ENCODE measurements at regions of chr2 and their contacts with region 1.

Region 1: DNA sequence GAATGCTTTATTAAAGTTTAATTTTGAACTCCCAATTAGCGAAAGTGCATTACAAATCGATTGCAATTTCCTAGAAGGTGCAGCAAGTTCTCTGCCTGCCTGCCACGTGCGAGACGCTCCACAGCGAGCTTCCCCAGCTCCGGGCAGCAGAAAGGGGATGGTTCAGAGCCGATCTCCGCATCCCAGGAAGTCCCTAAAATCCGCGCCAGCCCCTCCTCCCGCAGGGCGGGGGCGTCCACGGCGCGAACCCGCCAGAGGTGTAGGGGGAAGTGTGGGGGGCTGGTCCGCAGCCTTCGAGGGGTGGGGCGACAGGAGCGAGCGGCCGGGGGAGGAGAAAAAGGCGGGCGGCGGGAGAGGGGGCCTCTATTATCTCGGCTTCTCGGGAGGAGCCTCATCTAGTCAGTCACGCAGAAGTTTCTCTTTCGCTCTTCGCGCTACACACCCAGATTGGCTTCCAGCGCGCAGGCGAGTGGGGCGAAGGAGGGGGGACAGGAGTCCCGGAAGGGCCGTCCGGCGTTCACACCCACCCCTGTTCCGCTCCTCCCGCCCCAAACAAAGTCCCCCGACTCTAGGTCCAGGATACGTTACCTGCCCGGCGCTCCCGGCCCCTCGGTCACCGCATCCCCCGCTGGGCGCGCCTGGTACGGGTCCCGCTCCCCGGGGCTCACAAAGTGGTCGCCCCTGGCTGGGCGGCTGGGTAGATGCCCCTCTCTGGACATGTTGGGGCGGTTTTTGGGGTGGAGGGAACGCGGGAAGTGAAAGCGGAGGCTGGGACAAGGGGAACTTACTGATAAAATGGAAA is 9.1 kb upstream of the NR4A2 start:
- DNase-seq: peak; percentile 96
- H3K4me3 ChIP-seq: peak overlapping the region; percentile 65 to 80 (median 68)
- H3K27ac ChIP-seq: peak overlapping the region; percentile 98 to 100 (median 100)
- H3K4me1 ChIP-seq: peaks cover 9 to 49% (median 29%) of the 10 kb centered on the region in 6 donors
- H3K27me3 ChIP-seq: no peaks in the 10 kb centered on the region
- CTCF ChIP-seq: no peak
- POLR2A ChIP-seq: peak; percentile 17 to 93 (median 83)

Region 2: DNA sequence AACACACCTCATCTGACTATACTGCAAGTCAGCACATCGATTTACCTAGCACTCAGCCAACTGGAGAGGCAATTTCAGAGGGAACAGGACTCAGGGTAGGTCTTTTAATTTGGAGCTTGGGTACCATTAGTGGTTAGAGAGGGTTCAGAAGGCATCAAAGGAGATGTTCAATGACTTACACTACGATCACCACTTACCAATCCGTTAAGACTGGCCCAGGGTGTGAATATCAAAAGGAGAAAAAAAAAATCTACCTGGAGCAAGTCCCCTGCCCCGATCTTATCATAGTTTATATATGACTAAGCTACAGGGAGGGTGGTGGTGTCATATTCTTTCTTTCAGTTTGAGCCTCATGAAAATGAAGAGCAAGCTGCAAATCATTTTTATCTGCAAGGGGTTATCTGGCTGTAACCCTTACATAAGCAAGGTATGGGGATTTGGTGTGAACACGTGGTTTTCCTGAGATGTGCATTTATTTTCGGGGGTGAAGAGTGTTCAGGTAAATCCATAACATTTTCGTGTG is 58.1 kb after region 1 on chr2:
- intact Hi-C with region 1: loop called (anchors 10 kb)
- DNase-seq: no peak
- H3K4me3 ChIP-seq: peak overlapping the region; percentile 46 to 97 (median 73)
- H3K27ac ChIP-seq: peak overlapping the region; percentile 83 to 98 (median 92)
- H3K4me1 ChIP-seq: peaks cover 4 to 39% (median 19%) of the 10 kb centered on the region in 6 donors
- H3K27me3 ChIP-seq: no peaks in the 10 kb centered on the region
- CTCF ChIP-seq: no peak
- POLR2A ChIP-seq: no peak

Region 3: DNA sequence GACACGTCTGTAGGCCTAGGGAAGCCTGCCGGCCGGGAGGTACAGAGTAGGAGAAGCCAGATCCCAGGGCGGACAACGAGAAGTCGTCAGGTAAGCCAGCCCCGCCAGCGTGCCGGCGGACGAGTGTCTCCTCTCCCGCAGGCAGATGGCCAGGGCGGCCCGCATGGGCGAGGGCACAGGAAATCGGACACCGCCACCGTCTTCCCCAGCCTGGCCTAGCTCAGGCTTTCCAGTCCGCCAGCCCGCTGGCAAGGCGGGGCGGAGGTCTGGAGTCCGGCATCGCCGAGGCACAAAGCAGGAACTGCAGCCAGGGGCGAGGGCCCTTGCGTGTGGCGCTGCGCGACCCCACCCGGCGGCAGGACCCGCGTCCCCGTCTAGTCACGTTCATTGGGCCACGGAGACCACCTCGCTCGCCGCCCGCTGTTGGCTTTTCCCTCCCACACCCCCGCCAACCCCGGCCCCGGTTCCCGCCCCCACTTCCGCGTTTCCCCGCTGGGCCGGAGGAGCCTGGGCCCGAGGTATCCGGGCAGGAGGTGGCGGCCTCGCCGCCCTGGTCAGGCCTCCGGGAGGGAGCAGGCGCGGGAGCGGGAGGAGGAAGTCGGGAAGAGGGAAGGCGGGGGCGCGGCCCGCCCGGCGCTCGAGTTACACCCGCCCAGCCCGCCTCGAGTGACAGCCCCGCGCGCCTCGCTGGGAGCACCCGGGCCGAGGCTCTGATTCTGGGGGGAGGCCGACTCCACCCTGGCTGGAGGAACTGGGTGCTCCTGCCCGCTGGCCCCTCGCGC is 94.3 kb after region 1 on chr2 and contains the start of gene GPD2:
- intact Hi-C with region 1: loop called (anchors 10 kb)
- DNase-seq: peak; percentile 95
- H3K4me3 ChIP-seq: peak within 1 kb of the TSS; percentile 50 to 85 (median 62)
- H3K27ac ChIP-seq: peak within 1 kb of the TSS; percentile 89 to 97 (median 96)
- H3K4me1 ChIP-seq: peaks cover 9 to 56% (median 31%) of the 10 kb centered on the region in 6 donors
- H3K27me3 ChIP-seq: no peaks in the 10 kb centered on the region
- CTCF ChIP-seq: peak in 2 of 11 experiments; percentile 14 to 22
- POLR2A ChIP-seq: peak in 1 of 3 donors; percentile 29
- total RNA-seq, gene GPD2: 28.4 to 74.9 (median 32.1) TPM

Region 4: DNA sequence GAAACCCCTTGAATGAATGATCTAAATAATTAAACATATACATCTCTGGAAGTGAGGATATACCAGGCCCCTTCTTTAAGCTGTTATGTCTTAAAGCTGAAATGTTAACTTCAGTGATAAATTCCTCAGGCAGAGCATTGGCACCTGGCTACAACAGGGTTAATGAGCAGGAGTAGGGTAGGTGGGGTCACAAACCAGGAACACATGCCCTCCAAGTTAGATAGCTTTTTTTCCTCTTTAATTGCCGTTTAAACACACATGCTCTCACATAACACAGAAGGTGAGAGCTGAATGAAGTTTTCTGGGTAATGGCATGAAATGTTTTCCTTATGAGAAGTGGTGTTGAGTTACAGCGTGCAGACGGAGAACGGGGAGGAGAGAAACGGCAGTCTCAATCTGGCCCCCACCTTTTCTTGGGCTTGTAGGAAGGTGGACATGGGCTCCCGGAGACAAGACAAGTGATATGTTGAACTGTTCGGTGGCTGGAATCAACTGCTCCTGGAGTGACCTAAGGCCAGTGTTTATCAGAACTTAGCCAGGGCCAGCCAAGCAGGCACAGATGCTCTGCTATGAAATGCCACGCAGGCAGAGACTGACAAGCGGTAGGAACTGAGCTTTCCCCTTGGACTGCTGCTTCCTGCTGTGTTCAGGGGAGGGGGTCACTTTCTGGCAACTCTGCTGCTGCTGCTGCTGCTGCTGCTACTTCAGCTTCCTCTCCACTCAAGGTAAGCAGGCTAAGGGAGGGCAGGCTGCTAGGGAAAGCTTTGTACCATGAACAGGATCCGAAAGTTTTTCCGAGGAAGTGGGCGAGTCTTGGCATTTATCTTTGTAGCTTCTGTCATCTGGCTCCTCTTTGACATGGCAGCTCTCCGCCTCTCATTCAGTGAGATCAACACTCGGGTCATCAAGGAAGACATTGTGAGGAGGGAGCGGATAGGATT is 915.9 kb after region 1 on chr2 and contains the start of gene GALNT5:
- intact Hi-C with region 1: no loop called
- DNase-seq: no peak
- H3K4me3 ChIP-seq: peak within 1 kb of the TSS in 2 of 8 donors; percentile 7 to 36
- H3K27ac ChIP-seq: no peak within 1 kb of the TSS
- H3K4me1 ChIP-seq: peaks cover 0 to 10% (median 4%) of the 10 kb centered on the region in 6 donors
- H3K27me3 ChIP-seq: no peaks in the 10 kb centered on the region
- CTCF ChIP-seq: no peak
- POLR2A ChIP-seq: no peak
- total RNA-seq, gene GALNT5: 0.09 to 0.70 (median 0.12) TPM in 4 of 7 donors, not detected in the others

Region 5: DNA sequence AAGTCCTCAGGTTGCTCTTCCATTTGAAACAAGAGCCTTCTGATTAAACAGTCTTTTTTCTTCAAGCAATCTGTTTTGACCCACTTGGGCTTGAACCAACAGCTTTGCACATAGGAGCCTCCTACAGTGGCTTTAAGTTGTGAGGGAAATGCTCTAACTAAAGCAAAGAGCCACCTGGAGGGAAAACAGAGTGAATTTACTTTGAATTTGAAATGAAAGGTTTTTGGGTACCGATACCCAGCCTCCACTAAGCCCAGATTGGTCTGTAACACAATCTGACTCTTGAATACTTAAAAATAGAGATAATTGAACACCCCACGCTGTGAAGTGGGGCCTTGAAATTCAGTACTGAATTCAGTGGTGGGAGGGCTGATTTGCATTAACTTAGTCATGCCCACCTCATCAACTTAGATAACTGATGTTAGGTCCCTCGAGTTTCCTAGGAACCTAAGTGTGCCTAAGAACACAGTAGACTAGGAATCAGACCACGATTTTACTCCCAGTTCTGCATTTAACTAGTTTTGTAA is 1343.3 kb after region 1 on chr2:
- intact Hi-C with region 1: no loop called
- DNase-seq: no peak
- H3K4me3 ChIP-seq: no peak overlapping the region
- H3K27ac ChIP-seq: no peak overlapping the region
- H3K4me1 ChIP-seq: no peaks in the 10 kb centered on the region
- H3K27me3 ChIP-seq: no peaks in the 10 kb centered on the region
- CTCF ChIP-seq: no peak
- POLR2A ChIP-seq: no peak